ENCODE measurements at regions of chr1 and their contacts with region 1.

Region 1: DNA sequence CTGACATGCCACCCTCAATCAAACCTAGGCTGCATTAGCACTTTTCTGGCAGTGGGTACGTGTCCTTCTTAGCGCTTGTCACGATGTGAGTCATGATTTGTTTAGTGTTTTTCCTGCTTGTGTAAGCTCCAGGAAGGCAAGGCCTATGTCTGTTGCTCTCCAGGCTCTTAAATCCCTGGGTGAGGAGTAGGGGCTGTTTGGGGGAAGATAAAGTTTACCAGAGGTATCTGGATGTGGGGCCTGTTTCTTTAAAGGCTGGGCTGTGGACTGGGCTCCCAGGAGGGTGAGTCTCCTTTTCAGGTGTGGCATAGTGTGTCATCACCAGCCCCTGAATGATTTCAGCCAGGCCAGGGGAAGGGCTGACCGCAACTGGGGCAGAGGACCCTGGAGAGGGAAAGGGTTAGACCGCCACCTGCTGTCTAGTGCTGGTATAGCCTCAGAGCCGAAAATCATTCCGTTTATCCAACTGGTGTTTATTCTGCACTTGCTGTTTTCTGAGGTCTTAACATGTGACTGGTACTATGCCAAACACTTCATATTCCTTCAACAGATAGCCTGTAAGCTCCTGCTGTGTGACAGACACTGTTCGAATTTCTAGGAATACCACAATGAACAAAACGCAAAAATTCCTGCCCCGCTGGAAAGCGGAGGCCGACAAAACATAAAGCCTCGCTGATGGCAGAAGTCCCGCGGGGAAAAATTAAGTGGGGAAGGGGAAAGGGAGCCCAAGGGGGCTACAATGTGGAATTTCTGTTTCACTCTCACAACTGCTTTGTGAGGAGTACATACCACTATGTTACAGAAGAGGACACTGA is 9.7 kb downstream of the SERINC2 start:
- DNase-seq: peak; percentile 80 to 89
- ATAC-seq: peak; percentile 91 to 97 (median 93)
- H3K4me3 ChIP-seq: peak overlapping the region; percentile 15
- H3K27ac ChIP-seq: peak overlapping the region; percentile 89
- H3K4me1 ChIP-seq: peaks cover 22% of the 10 kb centered on the region
- H3K27me3 ChIP-seq: no peaks in the 10 kb centered on the region
- CTCF ChIP-seq: peak; percentile 94

Region 2: GRCh38 chr1:31182352-31182751 is 240.4 kb before region 1 on chr1:
- intact Hi-C with region 1: loop called (anchors 2 to 5 kb)
- DNase-seq: peak; percentile 86 to 94
- ATAC-seq: peak; percentile 93 to 94 (median 93)
- H3K4me3 ChIP-seq: peak overlapping the region; percentile 55
- H3K27ac ChIP-seq: peak overlapping the region; percentile 52
- H3K4me1 ChIP-seq: peaks cover 12% of the 10 kb centered on the region
- H3K27me3 ChIP-seq: no peaks in the 10 kb centered on the region
- CTCF ChIP-seq: peak; percentile 48

Region 3: DNA sequence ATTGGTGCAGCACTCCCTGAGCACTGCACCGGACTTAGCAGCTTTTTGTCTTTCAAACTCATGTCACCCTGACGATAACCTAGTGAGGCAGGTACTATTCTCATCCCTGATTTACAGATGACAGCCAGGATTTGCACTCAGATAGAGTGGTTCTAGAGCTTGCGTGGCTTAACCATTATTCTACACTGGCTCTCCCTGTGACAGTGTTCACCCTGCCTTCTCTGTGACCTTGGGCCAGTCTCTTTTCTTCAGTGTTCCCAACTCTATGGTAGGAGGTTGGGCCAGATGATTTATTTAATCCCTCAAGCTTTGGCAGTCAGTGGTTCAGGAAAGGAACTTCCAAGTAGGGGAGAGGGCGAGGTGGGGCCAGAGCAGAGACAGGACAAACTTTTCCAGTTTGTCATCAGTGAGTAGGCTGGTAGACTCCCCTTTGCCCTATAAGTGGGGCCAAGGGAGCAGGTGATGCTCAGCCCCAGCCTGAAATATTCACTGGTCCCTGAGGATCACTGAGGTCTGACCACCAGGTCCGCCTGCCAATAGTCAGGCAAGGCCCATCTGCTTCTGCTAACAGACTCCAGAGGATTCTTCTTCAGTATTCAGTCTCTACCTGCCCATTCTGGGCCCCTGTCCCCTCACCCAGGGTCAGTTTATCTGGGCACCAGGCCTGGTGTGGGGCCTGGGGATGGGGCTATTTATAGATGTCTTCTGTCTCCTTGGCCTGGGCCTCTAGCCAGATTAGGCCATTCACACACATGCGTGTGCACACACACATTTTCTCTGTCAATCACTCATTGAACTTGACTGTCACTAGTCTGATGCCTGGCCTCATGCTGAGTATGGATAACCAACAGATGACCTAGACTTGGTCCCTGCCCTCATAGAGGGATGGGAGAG is 41.1 kb before region 1 on chr1:
- intact Hi-C with region 1: loop called (anchors 5 kb)
- DNase-seq: peak; percentile 70 to 89
- ATAC-seq: peak; percentile 83 to 87 (median 84)
- H3K4me3 ChIP-seq: no peak overlapping the region
- H3K27ac ChIP-seq: peak overlapping the region; percentile 89
- H3K4me1 ChIP-seq: peaks cover 59% of the 10 kb centered on the region
- H3K27me3 ChIP-seq: no peaks in the 10 kb centered on the region
- CTCF ChIP-seq: no peak

Region 4: GRCh38 chr1:31394628-31395193 is 28.0 kb before region 1 on chr1:
- intact Hi-C with region 1: loop called in 1 of 2 experiments (anchors 1 kb)
- DNase-seq: peak; percentile 91 to 97
- ATAC-seq: peak; percentile 97 to 99 (median 98)
- H3K4me3 ChIP-seq: peak overlapping the region; percentile 53
- H3K27ac ChIP-seq: peak overlapping the region; percentile 86
- H3K4me1 ChIP-seq: peaks cover 5% of the 10 kb centered on the region
- H3K27me3 ChIP-seq: no peaks in the 10 kb centered on the region
- CTCF ChIP-seq: peak; percentile 92